Activated CD4-positive, alpha-beta T cell treated with anti-CD3 and anti-CD28 coated beads for 36 hours (primary cell): ENCODE measurements at regions of chr1 and their contacts with region 1.

Region 1: GRCh38 chr1:211382714-211383480 is 56.3 kb downstream of the TRAF5 start:
- DNase-seq: peak; percentile 86
- ATAC-seq: peak; percentile 72
- H3K4me3 Mint-ChIP-seq: peak overlapping the region; percentile 88
- H3K27ac Mint-ChIP-seq: peak overlapping the region; percentile 98
- H3K4me1 Mint-ChIP-seq: peaks cover 47% of the 10 kb centered on the region
- H3K27me3 Mint-ChIP-seq: no peaks in the 10 kb centered on the region

Region 2: DNA sequence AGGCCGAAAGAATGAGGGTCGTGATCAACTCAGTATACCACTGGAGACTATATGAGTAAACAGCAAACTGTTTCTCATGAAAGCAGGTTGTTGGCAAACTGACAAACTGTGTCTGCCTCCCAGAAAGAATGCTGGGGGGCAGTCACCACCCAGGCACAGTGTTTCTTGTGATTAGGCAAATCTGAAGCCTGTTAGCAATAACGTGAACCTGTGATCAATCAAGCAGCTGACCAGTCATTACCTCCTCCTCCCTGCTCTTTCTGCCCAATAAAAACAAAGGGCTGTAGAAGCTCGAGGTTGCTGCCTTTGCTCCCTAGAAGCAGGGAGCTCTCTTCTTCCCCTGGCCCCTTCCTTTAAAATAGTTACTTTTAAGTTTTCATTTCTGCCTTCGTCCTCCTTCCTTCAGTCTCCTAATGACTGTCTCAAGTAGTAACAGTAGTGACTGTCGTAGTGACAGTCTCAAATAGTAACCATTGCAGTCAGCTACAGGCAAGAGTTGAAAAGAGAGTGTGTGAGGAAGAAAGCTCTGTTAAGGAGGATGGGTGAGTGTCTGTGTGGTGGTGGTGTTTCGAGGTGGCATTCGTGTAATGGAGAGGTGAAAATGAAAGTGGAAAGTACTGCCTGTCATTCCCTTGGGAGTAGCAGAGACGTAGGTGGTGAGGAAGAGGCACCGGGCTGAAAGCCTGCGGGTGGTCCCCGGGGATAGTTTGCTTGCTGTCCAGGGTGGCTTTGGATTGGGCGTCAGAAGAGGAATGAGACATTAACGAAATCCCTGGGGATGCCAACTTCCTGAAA is 1039.7 kb before region 1 on chr1:
- CTCF ChIA-PET with region 1: no interaction called
- POLR2A ChIA-PET with region 1: no interaction called
- intact Hi-C with region 1: loop called in 1 of 2 experiments (anchors 5 kb)
- DNase-seq: no peak
- ATAC-seq: peak; percentile 50
- H3K4me3 Mint-ChIP-seq: no peak overlapping the region
- H3K27ac Mint-ChIP-seq: no peak overlapping the region
- H3K4me1 Mint-ChIP-seq: peaks cover 37% of the 10 kb centered on the region
- H3K27me3 Mint-ChIP-seq: no peaks in the 10 kb centered on the region

Region 3: GRCh38 chr1:210489491-210489890 is 893.4 kb before region 1 on chr1:
- CTCF ChIA-PET with region 1: no interaction called
- POLR2A ChIA-PET with region 1: no interaction called
- intact Hi-C with region 1: no loop called
- DNase-seq: no peak
- ATAC-seq: no peak
- H3K4me3 Mint-ChIP-seq: no peak overlapping the region
- H3K27ac Mint-ChIP-seq: no peak overlapping the region
- H3K4me1 Mint-ChIP-seq: no peaks in the 10 kb centered on the region
- H3K27me3 Mint-ChIP-seq: no peaks in the 10 kb centered on the region

Region 4: GRCh38 chr1:211068976-211069375 is 313.9 kb before region 1 on chr1:
- CTCF ChIA-PET with region 1: no interaction called
- POLR2A ChIA-PET with region 1: no interaction called
- intact Hi-C with region 1: no loop called
- DNase-seq: no peak
- ATAC-seq: no peak
- H3K4me3 Mint-ChIP-seq: no peak overlapping the region
- H3K27ac Mint-ChIP-seq: no peak overlapping the region
- H3K4me1 Mint-ChIP-seq: no peaks in the 10 kb centered on the region
- H3K27me3 Mint-ChIP-seq: peaks cover 6% of the 10 kb centered on the region

Region 5: GRCh38 chr1:211305044-211305443 is 77.9 kb before region 1 on chr1:
- CTCF ChIA-PET with region 1: no interaction called
- POLR2A ChIA-PET with region 1: no interaction called
- intact Hi-C with region 1: loop called in 1 of 2 experiments (anchors 5 kb)
- DNase-seq: peak; percentile 76
- ATAC-seq: peak; percentile 100
- H3K4me3 Mint-ChIP-seq: no peak overlapping the region
- H3K27ac Mint-ChIP-seq: peak overlapping the region; percentile 74
- H3K4me1 Mint-ChIP-seq: peaks cover 38% of the 10 kb centered on the region
- H3K27me3 Mint-ChIP-seq: no peaks in the 10 kb centered on the region

Region 6: DNA sequence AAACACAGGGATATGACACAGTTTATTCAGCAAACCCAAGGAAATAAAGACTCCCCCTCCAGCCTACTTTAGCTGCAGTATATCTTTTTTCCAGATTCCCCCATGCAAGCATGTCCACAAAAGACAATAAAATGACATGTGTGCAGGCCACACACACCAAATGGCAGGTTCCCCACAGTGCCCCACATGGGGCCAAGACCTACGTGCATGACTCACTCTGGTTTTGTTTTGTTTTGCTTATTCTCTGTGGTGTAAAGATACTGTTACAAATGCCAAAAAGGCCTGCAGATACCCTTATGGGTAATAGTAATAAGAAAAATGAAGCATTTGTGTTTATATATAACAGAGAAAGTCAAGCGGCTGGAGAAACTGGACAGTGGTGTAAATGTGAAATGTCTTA is 37.5 kb after region 1 on chr1:
- CTCF ChIA-PET with region 1: no interaction called
- POLR2A ChIA-PET with region 1: no interaction called
- intact Hi-C with region 1: loop called (anchors 2 kb)
- DNase-seq: peak; percentile 44
- ATAC-seq: peak; percentile 36
- H3K4me3 Mint-ChIP-seq: no peak overlapping the region
- H3K27ac Mint-ChIP-seq: no peak overlapping the region
- H3K4me1 Mint-ChIP-seq: peaks cover 23% of the 10 kb centered on the region
- H3K27me3 Mint-ChIP-seq: no peaks in the 10 kb centered on the region